ENCODE measurements at regions of chr17 and their contacts with region 1.

Region 1: DNA sequence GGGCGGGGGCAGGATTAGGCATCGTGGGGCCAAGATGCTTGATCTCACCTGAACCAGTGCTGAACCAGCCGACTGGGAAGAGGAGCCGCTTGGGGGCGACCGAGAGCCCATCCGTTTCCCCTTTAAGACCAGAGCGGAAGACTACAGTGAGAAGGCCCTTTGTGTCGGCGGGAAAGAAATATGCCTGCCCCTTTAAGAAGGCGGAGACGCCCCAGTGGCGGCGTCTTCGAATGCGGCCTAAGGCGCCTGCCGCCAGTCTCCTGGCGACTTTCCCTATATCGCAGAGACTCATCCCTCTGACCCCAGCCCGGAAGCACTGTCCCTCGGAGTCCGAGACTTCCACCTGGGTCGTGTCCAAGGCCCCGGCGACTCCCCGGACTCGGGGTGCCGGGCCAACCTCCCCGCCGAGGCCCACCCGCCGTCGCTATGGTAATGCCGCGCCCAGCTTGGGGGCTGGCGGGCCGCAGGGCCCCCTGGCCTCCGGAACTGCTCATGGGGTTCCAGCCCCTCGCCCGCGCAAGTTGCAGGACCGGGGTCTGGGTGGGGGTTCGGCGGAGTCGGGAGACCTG is at the start of gene HROB:
- DNase-seq: peak; percentile 100
- ATAC-seq: peak; percentile 53
- H3K4me3 ChIP-seq: peak within 1 kb of the TSS; percentile 89
- H3K27ac ChIP-seq: peak within 1 kb of the TSS; percentile 81
- H3K4me1 ChIP-seq: peaks cover 33% of the 10 kb centered on the region
- H3K27me3 ChIP-seq: no peaks in the 10 kb centered on the region
- CTCF ChIP-seq: peak; percentile 88
- total RNA-seq, gene HROB: 13.5 and 14.3 TPM in 2 replicates

Region 2: DNA sequence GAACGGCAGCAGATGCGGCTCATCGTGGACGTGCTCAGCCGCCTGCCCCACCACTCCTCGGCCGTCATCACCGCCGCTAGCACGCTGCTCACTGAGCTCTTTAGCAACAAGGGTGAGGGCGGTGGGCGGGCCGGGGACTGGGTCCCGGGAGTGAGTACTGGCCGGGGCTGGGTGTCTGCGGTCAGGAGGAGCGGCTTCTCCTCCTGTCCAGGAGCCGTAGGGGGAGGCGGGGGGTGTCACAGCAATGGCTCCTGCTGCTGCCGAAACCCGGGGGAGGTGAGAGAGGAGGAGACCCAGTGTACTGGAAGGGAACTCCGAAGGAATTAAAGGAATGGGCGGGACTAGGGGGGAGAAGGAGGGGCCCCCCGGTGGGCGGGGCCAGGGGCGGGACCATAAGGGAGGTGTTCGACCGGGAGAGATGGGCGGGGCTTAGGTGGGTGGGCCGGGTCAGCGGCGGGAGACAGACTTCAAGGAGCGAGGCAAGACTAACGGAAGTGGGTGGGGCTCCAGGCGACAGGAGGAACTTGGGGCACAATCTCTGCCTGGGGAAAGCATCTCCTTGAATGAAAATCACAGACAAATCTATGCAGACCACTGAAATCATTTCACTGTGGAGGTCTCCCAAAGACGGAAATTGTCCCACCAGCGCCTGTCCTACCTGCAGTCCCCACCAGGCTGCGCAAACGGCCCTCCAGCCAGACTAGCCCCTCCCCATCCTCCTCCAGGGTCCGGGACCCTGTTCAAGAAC is 135.0 kb before region 1 on chr17:
- CTCF ChIA-PET with region 1: no interaction called
- POLR2A ChIA-PET with region 1: no interaction called
- intact Hi-C with region 1: loop called (anchors 5 kb)
- DNase-seq: peak; percentile 100
- ATAC-seq: peak; percentile 59
- H3K4me3 ChIP-seq: peak overlapping the region; percentile 83
- H3K27ac ChIP-seq: peak overlapping the region; percentile 66
- H3K4me1 ChIP-seq: peaks cover 33% of the 10 kb centered on the region
- H3K27me3 ChIP-seq: no peaks in the 10 kb centered on the region
- CTCF ChIP-seq: peak; percentile 64

Region 3: GRCh38 chr17:44086364-44087311 is 55.2 kb before region 1 on chr17:
- CTCF ChIA-PET with region 1: interaction called, 12 read pairs
- POLR2A ChIA-PET with region 1: no interaction called
- intact Hi-C with region 1: no loop called
- DNase-seq: peak; percentile 92
- ATAC-seq: peak; percentile 87
- H3K4me3 ChIP-seq: peak overlapping the region; percentile 17; the same call in 1 of the 2 replicates
- H3K27ac ChIP-seq: peak overlapping the region; percentile 79
- H3K4me1 ChIP-seq: peaks cover 18% of the 10 kb centered on the region
- H3K27me3 ChIP-seq: no peaks in the 10 kb centered on the region
- CTCF ChIP-seq: no peak

Region 4: DNA sequence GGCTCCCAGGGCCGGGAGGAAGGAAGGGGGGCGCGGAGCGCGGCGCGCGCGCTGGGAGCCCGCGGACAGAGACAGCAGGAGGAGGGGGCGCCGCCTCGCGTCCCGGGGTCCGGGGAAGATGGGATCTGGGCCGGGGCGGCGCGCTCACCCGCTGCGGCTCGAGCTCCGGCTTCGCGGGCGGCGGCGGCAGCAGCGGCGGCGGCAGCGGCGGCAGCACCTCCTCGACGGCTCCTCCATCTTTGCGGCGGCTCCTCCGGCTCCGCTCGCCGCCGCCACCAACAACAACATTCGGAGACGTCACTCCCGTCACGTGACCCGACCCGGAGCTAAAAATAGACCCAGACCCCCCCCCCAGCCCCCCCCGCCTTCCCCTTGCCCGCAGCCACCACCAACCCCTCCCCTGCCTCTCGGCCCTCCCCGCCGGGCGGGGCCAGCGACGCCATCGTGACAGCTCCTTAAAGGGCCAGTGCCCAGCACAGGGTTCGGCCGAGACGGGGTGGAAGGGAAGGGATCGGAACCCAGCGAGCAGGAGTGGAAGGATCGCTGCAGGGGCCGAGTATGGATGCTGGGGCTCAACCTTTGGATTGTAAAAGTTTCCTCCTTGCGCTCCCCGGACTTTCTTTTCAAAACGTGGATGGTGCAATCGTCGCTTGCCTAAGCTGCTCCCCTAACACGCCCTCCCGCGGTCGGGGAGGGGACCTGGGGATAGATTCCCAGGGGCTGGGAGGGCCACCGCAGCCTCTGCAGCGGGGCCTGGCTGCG is 18.3 kb before region 1 on chr17 and contains the start of gene HDAC5:
- CTCF ChIA-PET with region 1: interaction called, 17 read pairs
- POLR2A ChIA-PET with region 1: interaction called, 4 read pairs
- intact Hi-C with region 1: loop called (anchors 1 kb)
- DNase-seq: peak; percentile 97
- ATAC-seq: peak; percentile 92
- H3K4me3 ChIP-seq: peak within 1 kb of the TSS; percentile 72
- H3K27ac ChIP-seq: peak within 1 kb of the TSS; percentile 57
- H3K4me1 ChIP-seq: peaks cover 13% of the 10 kb centered on the region
- H3K27me3 ChIP-seq: no peaks in the 10 kb centered on the region
- CTCF ChIP-seq: peak; percentile 77
- total RNA-seq, gene HDAC5: 39.1 and 47.1 TPM in 2 replicates

Region 5: DNA sequence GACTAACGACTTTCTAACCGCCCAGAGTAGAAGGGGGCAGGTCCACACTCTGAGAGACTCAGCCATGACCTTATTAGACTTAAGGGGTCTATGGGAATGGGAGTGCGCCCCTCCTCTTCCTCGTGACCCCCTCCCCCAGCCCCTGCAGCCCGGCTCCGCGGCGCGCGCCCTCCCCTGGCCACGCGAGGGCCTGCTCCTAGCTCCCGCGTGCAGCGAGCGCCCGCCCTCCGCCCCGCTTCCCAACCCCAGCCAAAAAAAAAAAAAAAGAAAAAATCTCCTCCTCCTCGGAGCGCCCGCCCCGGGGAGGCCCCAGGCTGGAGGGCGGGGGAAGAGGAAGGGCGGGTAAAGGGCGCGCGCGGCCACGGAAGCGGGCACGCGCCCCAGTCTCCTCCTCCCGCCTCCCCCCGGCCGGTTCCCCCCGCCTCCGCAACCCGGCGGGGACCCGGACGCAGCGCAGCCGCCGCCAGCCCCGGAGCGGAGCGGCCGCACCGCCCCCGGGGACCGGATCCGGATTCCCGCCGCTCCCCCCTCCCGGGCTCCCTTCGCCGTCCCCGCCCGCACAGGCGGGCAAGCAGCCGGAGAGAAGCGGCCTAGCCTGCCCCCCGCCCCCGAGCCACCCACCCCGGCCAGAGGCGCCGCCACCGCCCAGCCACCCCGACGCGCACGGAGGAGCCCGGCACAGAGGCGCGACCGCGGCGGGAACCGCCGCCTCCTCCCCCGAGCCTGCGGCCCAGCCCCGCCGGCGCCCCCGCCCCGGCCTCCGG is 76.7 kb after region 1 on chr17:
- CTCF ChIA-PET with region 1: no interaction called
- POLR2A ChIA-PET with region 1: interaction called, 4 read pairs
- intact Hi-C with region 1: loop called (anchors 1 kb)
- DNase-seq: peak; percentile 97
- ATAC-seq: peak; percentile 10
- H3K4me3 ChIP-seq: peak overlapping the region; percentile 73
- H3K27ac ChIP-seq: peak overlapping the region; percentile 71
- H3K4me1 ChIP-seq: peaks cover 32% of the 10 kb centered on the region
- H3K27me3 ChIP-seq: no peaks in the 10 kb centered on the region
- CTCF ChIP-seq: peak; percentile 76

Region 6: GRCh38 chr17:44424828-44425461 is 283.1 kb after region 1 on chr17:
- CTCF ChIA-PET with region 1: no interaction called
- POLR2A ChIA-PET with region 1: no interaction called
- intact Hi-C with region 1: no loop called
- DNase-seq: no peak
- ATAC-seq: no peak
- H3K4me3 ChIP-seq: no peak overlapping the region
- H3K27ac ChIP-seq: no peak overlapping the region
- H3K4me1 ChIP-seq: no peaks in the 10 kb centered on the region
- H3K27me3 ChIP-seq: no peaks in the 10 kb centered on the region
- CTCF ChIP-seq: no peak